OCI-LY7 (cell line): ENCODE measurements at regions of chr6 and their contacts with region 1.

Region 1: DNA sequence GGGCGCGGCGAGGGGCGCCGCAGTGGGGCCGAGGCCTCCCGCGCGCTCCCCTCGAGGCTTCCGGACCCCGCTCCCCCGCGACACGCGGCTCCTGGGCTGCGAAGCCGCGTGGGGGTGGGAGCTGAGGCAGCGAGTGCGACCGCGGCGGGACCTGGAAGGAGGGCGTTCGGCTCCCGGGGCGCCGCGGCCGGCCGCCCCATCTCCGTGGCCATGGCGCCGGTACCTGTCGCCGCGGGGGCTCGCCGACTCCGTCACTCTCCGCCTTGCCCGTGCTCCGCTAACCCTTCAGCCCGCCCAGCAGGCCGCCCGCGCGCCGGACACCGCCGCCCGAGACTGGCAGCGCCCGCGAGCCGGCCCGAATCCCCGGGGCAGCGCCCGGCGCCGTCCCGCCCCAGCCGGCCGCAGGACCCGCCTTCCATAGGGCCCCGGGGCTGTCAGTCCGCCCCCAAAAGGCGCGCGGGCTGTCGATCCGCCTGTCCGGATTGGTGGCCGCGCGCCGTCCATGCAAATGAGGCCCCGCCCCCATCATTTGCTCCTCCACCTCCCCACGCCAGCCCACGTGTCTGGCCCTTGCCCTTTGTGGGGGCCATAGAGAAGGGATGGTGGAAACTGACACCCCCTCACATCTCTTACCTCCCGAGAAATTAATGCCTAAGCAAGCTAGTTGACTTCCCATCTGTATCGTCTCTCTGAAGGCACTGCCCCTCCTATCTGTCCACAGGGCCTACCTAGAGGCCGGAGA is at the start of gene FKBP5:
- DNase-seq: peak; percentile 95
- H3K4me3 ChIP-seq: peak within 1 kb of the TSS; percentile 88
- H3K27ac ChIP-seq: peak within 1 kb of the TSS; percentile 76
- H3K4me1 ChIP-seq: peaks cover 14% of the 10 kb centered on the region
- CTCF ChIP-seq: no peak
- total RNA-seq, gene FKBP5: 42.5 and 43.2 TPM in 2 replicates

Region 2: GRCh38 chr6:35583893-35584688 is 104.7 kb before region 1 on chr6:
- CTCF ChIA-PET with region 1: no interaction called
- POLR2A ChIA-PET with region 1: no interaction called
- intact Hi-C with region 1: loop called (anchors 5 kb)
- DNase-seq: peak; percentile 83
- H3K4me3 ChIP-seq: no peak overlapping the region
- H3K27ac ChIP-seq: no peak overlapping the region
- H3K4me1 ChIP-seq: peaks cover 4% of the 10 kb centered on the region
- CTCF ChIP-seq: peak; percentile 98

Region 3: DNA sequence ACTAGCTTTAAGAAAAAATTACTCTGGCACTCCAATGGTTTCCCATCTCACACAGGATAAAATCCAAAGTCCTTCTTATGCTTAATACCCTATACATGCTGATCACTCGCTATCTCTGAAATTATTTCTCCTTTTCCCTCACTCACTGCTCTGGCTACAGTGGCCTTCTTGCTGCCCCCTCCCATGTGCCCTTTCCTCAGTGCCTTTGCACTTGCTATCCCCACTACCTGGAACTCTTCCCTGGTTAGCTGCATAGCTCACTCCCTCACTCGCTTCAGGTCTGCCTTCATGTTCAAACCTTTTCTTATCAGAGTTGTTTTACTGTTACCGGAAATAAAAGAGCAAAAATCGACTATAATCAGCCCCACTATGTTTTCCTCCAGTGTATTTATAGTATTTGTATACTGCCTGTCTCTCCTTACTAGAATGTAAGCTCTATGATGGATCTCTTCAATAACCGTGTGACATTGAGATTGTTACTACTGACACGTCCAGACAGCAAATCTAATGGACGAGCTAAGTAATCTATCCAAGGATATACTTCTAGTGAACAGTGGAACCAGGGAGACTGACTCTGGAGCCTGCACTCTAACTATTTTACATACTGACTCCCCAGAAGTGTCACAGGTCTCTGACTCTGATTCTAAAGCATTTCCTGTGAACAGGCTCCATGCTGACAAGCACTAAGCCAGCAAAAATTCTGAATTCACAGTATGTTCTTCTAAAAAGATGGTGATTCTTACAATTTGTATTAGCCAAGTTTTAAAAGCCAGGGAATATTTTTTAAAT is 25.1 kb before region 1 on chr6:
- CTCF ChIA-PET with region 1: no interaction called
- POLR2A ChIA-PET with region 1: interaction called, 11 read pairs
- intact Hi-C with region 1: no loop called
- DNase-seq: peak; percentile 67
- H3K4me3 ChIP-seq: peak overlapping the region; percentile 48
- H3K27ac ChIP-seq: peak overlapping the region; percentile 51
- H3K4me1 ChIP-seq: peaks cover 57% of the 10 kb centered on the region
- CTCF ChIP-seq: no peak

Region 4: DNA sequence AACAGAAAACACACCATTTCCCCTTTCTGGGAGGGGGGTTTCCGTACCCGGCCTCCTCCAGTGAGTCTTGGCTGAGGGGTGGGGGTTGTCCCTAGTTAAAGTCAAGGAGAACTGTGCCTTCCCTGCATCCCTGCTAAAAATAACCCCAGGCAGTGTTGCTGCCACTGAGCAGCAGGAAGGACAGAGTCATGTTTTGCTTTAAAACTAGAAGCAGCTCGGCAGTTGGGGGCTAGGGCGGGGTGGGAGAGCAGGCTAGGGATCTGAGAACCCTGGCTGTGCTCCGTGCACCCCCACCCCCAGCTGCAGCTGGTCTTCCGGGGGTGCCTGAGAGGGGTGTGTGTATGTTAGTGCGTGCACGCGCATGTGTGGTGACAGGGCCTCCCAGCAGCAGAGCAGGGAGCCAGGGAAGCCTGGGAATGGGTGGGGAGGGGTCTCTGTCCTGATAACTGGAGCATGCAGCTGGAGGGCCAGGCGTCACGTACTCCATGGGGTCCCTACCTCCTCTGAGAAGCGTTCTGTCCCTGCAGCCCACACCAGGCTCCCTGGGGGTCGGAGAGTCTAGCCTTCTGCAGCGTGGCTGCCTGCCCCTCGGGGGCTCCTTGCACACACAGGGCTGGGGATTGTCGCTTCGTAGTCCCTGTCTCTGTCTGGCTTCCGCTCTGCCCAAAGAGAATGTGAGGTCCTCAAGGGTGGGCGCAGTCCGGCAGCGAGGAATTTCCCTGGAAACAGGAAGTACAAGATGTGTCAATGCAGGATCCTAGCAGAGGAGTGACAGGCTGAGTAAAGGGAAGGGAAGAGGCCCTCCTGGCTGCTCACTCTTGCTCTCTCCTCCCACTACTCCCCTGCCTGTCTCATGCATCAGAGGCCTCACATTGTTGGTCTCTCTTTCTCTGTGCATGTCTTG is 31.3 kb after region 1 on chr6:
- CTCF ChIA-PET with region 1: interaction called, 4 read pairs
- POLR2A ChIA-PET with region 1: interaction called, 5 read pairs
- intact Hi-C with region 1: loop called (anchors 2 kb)
- DNase-seq: peak; percentile 83
- H3K4me3 ChIP-seq: peak overlapping the region; percentile 51
- H3K27ac ChIP-seq: peak overlapping the region; percentile 89
- H3K4me1 ChIP-seq: peaks cover 80% of the 10 kb centered on the region
- CTCF ChIP-seq: no peak

Region 5: GRCh38 chr6:35731736-35732532 is 43.2 kb after region 1 on chr6:
- CTCF ChIA-PET with region 1: interaction called, 11 read pairs
- POLR2A ChIA-PET with region 1: interaction called, 9 read pairs
- intact Hi-C with region 1: loop called (anchors 1 kb)
- DNase-seq: peak; percentile 94
- H3K4me3 ChIP-seq: peak overlapping the region; percentile 76
- H3K27ac ChIP-seq: peak overlapping the region; percentile 96
- H3K4me1 ChIP-seq: peaks cover 71% of the 10 kb centered on the region
- CTCF ChIP-seq: peak; percentile 48; the same call in 1 of the 2 replicates